CD4-positive, alpha-beta T cell (primary cell): ENCODE measurements at regions of chr13 and their contacts with region 1.

Region 1: GRCh38 chr13:98476538-98476966 is 100.4 kb downstream of the STK24 start:
- DNase-seq: peak; percentile 59 to 97 (median 82)
- ATAC-seq: peak; percentile 92
- H3K4me3 ChIP-seq: peak overlapping the region; percentile 30
- H3K4me3 Mint-ChIP-seq: peak overlapping the region; percentile 77
- H3K27ac ChIP-seq: peak overlapping the region; percentile 66 to 78
- H3K27ac Mint-ChIP-seq: peak overlapping the region; percentile 92
- H3K4me1 ChIP-seq: peaks cover 72% of the 10 kb centered on the region
- H3K4me1 Mint-ChIP-seq: peaks cover 67% of the 10 kb centered on the region
- H3K27me3 ChIP-seq: no peaks in the 10 kb centered on the region
- H3K27me3 Mint-ChIP-seq: no peaks in the 10 kb centered on the region
- CTCF ChIP-seq: no peak

Region 2: DNA sequence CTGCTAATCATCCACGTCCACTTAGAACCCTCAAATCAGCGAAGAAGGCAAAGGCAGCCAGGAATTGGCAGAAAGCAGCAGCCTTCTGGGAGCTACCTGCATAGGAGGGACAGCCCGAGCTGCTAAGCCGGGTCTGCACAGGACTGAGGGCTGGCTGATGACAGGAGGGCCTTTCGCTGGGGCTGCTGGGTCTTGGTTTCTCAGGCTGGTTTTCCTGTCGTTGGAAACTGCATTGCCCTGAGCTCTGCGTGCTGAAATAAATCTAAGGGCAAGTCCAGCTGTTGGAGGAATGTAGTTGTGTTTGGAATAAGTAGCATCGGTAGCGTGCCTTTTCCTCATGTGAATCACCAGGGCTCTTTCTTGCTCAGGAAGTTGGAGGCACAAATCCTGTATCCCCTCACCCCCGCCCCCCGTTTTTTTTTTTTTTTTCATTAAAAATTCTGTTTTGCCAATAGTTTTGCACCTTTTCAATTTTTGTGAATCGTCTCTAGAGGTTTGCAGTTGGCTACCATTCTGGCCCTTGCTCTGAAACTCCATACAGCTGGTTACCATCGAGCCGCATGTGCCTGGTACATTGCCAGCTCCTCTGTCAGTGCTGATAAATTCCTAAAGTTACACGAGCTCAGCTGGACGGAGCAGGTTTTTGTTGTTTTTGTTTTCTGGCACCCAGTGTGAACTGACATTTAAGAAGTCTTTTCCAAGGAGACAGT is 105.6 kb before region 1 on chr13:
- CTCF ChIA-PET with region 1: no interaction called
- POLR2A ChIA-PET with region 1: no interaction called
- intact Hi-C with region 1: no loop called
- DNase-seq: no peak
- ATAC-seq: no peak
- H3K4me3 ChIP-seq: no peak overlapping the region
- H3K4me3 Mint-ChIP-seq: no peak overlapping the region
- H3K27ac ChIP-seq: no peak overlapping the region
- H3K27ac Mint-ChIP-seq: no peak overlapping the region
- H3K4me1 ChIP-seq: no peaks in the 10 kb centered on the region
- H3K4me1 Mint-ChIP-seq: no peaks in the 10 kb centered on the region
- H3K27me3 ChIP-seq: no peaks in the 10 kb centered on the region
- H3K27me3 Mint-ChIP-seq: peaks cover 25% of the 10 kb centered on the region
- CTCF ChIP-seq: no peak

Region 3: GRCh38 chr13:98445340-98446233 is 31.0 kb before region 1 on chr13:
- CTCF ChIA-PET with region 1: interaction called, 12 read pairs
- POLR2A ChIA-PET with region 1: interaction called, 7 read pairs
- intact Hi-C with region 1: no loop called
- DNase-seq: peak; percentile 62 to 88 (median 74)
- ATAC-seq: peak; percentile 99
- H3K4me3 ChIP-seq: no peak overlapping the region
- H3K4me3 Mint-ChIP-seq: peak overlapping the region; percentile 63
- H3K27ac ChIP-seq: peak overlapping the region; percentile 52 to 55
- H3K27ac Mint-ChIP-seq: peak overlapping the region; percentile 90
- H3K4me1 ChIP-seq: peaks cover 16% of the 10 kb centered on the region
- H3K4me1 Mint-ChIP-seq: peaks cover 22% of the 10 kb centered on the region
- H3K27me3 ChIP-seq: no peaks in the 10 kb centered on the region
- H3K27me3 Mint-ChIP-seq: no peaks in the 10 kb centered on the region
- CTCF ChIP-seq: peak; percentile 97

Region 4: GRCh38 chr13:98460534-98460933 is 16.0 kb before region 1 on chr13:
- CTCF ChIA-PET with region 1: no interaction called
- POLR2A ChIA-PET with region 1: no interaction called
- intact Hi-C with region 1: loop called in 1 of 2 experiments (anchors 2 kb)
- DNase-seq: no peak
- ATAC-seq: no peak
- H3K4me3 ChIP-seq: no peak overlapping the region
- H3K4me3 Mint-ChIP-seq: no peak overlapping the region
- H3K27ac ChIP-seq: no peak overlapping the region
- H3K27ac Mint-ChIP-seq: peak overlapping the region; percentile 68
- H3K4me1 ChIP-seq: no peaks in the 10 kb centered on the region
- H3K4me1 Mint-ChIP-seq: peaks cover 11% of the 10 kb centered on the region
- H3K27me3 ChIP-seq: no peaks in the 10 kb centered on the region
- H3K27me3 Mint-ChIP-seq: no peaks in the 10 kb centered on the region
- CTCF ChIP-seq: no peak

Region 5: GRCh38 chr13:98509271-98510155 is 33.0 kb after region 1 on chr13:
- CTCF ChIA-PET with region 1: no interaction called
- POLR2A ChIA-PET with region 1: interaction called, 3 read pairs
- intact Hi-C with region 1: loop called in 1 of 2 experiments (anchors 5 kb)
- DNase-seq: peak in 9 of 14 experiments; percentile 15 to 80 (median 36)
- ATAC-seq: peak; percentile 71
- H3K4me3 ChIP-seq: no peak overlapping the region
- H3K4me3 Mint-ChIP-seq: peak overlapping the region; percentile 4
- H3K27ac ChIP-seq: peak overlapping the region in 1 of 2 donors; percentile 9
- H3K27ac Mint-ChIP-seq: peak overlapping the region; percentile 82
- H3K4me1 ChIP-seq: peaks cover 68% of the 10 kb centered on the region
- H3K4me1 Mint-ChIP-seq: peaks cover 96% of the 10 kb centered on the region
- H3K27me3 ChIP-seq: no peaks in the 10 kb centered on the region
- H3K27me3 Mint-ChIP-seq: no peaks in the 10 kb centered on the region
- CTCF ChIP-seq: no peak

Region 6: GRCh38 chr13:98565726-98566565 is 89.4 kb after region 1 on chr13:
- CTCF ChIA-PET with region 1: interaction called, 3 read pairs
- POLR2A ChIA-PET with region 1: interaction called, 12 read pairs
- intact Hi-C with region 1: no loop called
- DNase-seq: peak in 3 of 14 experiments; percentile 18 to 40 (median 34)
- ATAC-seq: no peak
- H3K4me3 ChIP-seq: peak overlapping the region; percentile 8
- H3K4me3 Mint-ChIP-seq: peak overlapping the region; percentile 80
- H3K27ac ChIP-seq: peak overlapping the region; percentile 58 to 71
- H3K27ac Mint-ChIP-seq: peak overlapping the region; percentile 93
- H3K4me1 ChIP-seq: peaks cover 89% of the 10 kb centered on the region
- H3K4me1 Mint-ChIP-seq: peaks cover 96% of the 10 kb centered on the region
- H3K27me3 ChIP-seq: no peaks in the 10 kb centered on the region
- H3K27me3 Mint-ChIP-seq: no peaks in the 10 kb centered on the region
- CTCF ChIP-seq: no peak

Region 7: DNA sequence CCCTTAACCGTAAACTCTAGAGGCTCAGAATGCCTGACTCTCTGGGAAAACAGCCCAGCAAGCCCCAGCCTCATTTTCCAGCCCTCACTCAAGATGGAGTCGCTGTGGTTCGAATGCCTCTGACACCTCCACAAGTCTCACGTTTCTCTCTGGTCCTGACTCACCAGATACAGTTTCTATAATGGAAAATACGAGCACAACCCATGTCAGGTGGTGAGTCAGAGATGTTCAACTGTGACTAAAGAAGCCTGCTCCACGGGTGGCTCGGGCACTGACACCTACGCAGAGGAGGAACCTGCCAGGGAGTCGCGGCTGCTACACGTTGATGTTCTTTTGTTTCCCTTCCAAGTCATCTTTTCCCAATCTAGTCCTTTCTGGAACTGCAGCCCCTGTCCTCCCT is 187.5 kb after region 1 on chr13:
- CTCF ChIA-PET with region 1: no interaction called
- POLR2A ChIA-PET with region 1: no interaction called
- intact Hi-C with region 1: no loop called
- DNase-seq: peak in 3 of 14 experiments; percentile 7 to 21 (median 9)
- ATAC-seq: no peak
- H3K4me3 ChIP-seq: no peak overlapping the region
- H3K4me3 Mint-ChIP-seq: no peak overlapping the region
- H3K27ac ChIP-seq: no peak overlapping the region
- H3K27ac Mint-ChIP-seq: no peak overlapping the region
- H3K4me1 ChIP-seq: peaks cover 3% of the 10 kb centered on the region
- H3K4me1 Mint-ChIP-seq: peaks cover 10% of the 10 kb centered on the region
- H3K27me3 ChIP-seq: no peaks in the 10 kb centered on the region
- H3K27me3 Mint-ChIP-seq: no peaks in the 10 kb centered on the region
- CTCF ChIP-seq: no peak

Region 8: GRCh38 chr13:98707281-98707999 is 230.9 kb after region 1 on chr13:
- CTCF ChIA-PET with region 1: no interaction called
- POLR2A ChIA-PET with region 1: no interaction called
- intact Hi-C with region 1: no loop called
- DNase-seq: no peak
- ATAC-seq: no peak
- H3K4me3 ChIP-seq: no peak overlapping the region
- H3K4me3 Mint-ChIP-seq: no peak overlapping the region
- H3K27ac ChIP-seq: no peak overlapping the region
- H3K27ac Mint-ChIP-seq: no peak overlapping the region
- H3K4me1 ChIP-seq: no peaks in the 10 kb centered on the region
- H3K4me1 Mint-ChIP-seq: no peaks in the 10 kb centered on the region
- H3K27me3 ChIP-seq: peaks cover 2 to 3% of the 10 kb centered on the region in 2 experiments
- H3K27me3 Mint-ChIP-seq: peaks cover 30% of the 10 kb centered on the region
- CTCF ChIP-seq: no peak